ENCODE measurements at regions of chr17 and their contacts with region 1.

Region 1: DNA sequence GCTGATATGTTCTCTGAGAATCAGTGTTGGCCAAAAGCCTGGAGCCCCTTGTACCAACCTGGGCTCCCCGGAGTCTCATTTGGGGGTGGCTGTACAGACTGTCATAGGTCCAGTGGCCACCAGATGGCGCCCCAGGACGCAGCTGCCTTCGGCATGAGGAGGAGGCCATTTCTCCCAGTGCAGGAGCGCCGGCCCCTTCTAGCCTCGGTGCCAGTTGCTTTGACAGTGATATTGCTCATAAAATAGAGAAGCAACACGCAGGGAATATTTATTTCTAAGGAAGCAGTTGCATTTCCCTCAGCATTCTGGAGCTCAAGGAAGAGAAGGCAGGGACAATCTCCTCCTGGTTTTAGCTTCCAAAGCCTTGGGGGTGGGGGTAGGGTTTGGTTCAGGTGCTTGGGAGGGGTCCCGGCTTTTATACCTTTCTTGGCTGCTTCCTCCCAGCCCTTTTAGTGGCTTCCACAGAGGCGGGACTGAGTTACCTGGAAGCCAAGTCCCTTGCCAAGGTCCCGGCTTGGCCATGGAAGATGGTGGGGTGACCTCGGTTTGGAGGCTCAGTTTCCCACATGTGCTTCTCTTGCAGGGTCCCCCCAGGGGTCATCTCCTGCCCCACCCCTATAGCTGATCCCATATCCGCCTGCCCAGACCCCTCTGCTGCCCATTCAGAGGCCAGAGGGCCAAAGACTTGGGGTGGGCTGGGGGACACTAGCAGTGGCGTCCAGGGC is 117.8 kb upstream of the CDC42EP4 start:
- DNase-seq: peak; percentile 92
- ATAC-seq: peak; percentile 98
- H3K4me3 Mint-ChIP-seq: no peak overlapping the region
- H3K27ac Mint-ChIP-seq: no peak overlapping the region
- H3K4me1 Mint-ChIP-seq: peaks cover 9% of the 10 kb centered on the region
- H3K27me3 Mint-ChIP-seq: no peaks in the 10 kb centered on the region
- CTCF ChIP-seq: peak; percentile 92

Region 2: GRCh38 chr17:73710095-73710592 is 280.5 kb after region 1 on chr17:
- CTCF ChIA-PET with region 1: interaction called, 77 read pairs
- POLR2A ChIA-PET with region 1: no interaction called
- intact Hi-C with region 1: loop called (anchors 2 kb)
- DNase-seq: peak; percentile 81
- ATAC-seq: peak; percentile 89
- H3K4me3 Mint-ChIP-seq: no peak overlapping the region
- H3K27ac Mint-ChIP-seq: no peak overlapping the region
- H3K4me1 Mint-ChIP-seq: peaks cover 8% of the 10 kb centered on the region
- H3K27me3 Mint-ChIP-seq: no peaks in the 10 kb centered on the region
- CTCF ChIP-seq: peak; percentile 89

Region 3: GRCh38 chr17:73717690-73718089 is 288.1 kb after region 1 on chr17:
- CTCF ChIA-PET with region 1: interaction called, 12 read pairs
- POLR2A ChIA-PET with region 1: interaction called, 3 read pairs
- intact Hi-C with region 1: no loop called
- DNase-seq: no peak
- ATAC-seq: no peak
- H3K4me3 Mint-ChIP-seq: no peak overlapping the region
- H3K27ac Mint-ChIP-seq: no peak overlapping the region
- H3K4me1 Mint-ChIP-seq: peaks cover 28% of the 10 kb centered on the region
- H3K27me3 Mint-ChIP-seq: no peaks in the 10 kb centered on the region
- CTCF ChIP-seq: no peak